Activated naive CD4-positive, alpha-beta T cell treated with anti-CD3 and anti-CD28 coated beads for 36 hours (primary cell): ENCODE measurements at regions of chr5 and their contacts with region 1.

Region 1: DNA sequence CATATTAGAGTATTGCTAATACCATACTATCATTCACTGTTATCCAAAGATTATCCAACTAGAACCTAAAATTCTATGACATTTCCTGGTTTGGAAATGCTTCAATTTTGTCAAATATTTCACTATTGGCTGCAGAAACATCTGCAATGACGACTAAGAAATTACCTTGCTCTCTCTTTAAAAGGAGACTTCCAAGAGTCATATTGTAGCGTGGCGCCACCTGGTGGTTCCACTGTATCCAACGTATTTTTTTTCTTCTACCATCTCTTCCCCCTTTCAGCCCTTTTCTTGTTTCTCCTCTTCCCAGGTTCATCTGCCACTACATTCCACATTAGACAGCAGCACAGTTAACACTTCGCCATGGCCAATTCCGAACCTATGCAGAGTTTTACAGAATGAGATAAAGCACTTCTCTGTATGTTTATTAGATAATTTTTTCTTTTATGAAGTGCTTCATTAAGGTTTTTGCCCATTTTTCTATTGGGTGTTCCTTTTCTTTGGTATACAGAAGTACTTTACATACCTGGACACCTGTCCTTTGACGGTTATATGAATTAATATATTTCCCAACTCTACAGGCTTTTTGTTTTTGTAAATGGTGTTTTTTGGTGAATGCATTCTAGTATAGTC is 153.5 kb downstream of the CDC42SE2 start:
- DNase-seq: peak; percentile 95
- H3K4me3 Mint-ChIP-seq: peak overlapping the region; percentile 34
- H3K27ac Mint-ChIP-seq: peak overlapping the region; percentile 81
- H3K4me1 Mint-ChIP-seq: peaks cover 41% of the 10 kb centered on the region
- H3K27me3 Mint-ChIP-seq: no peaks in the 10 kb centered on the region

Region 2: GRCh38 chr5:130720355-130720754 is 697.0 kb before region 1 on chr5:
- CTCF ChIA-PET with region 1: no interaction called
- intact Hi-C with region 1: loop called (anchors 10 kb)
- DNase-seq: no peak
- H3K4me3 Mint-ChIP-seq: no peak overlapping the region
- H3K27ac Mint-ChIP-seq: no peak overlapping the region
- H3K4me1 Mint-ChIP-seq: no peaks in the 10 kb centered on the region
- H3K27me3 Mint-ChIP-seq: peaks cover 8% of the 10 kb centered on the region

Region 3: GRCh38 chr5:131068893-131069643 is 348.3 kb before region 1 on chr5:
- CTCF ChIA-PET with region 1: no interaction called
- intact Hi-C with region 1: loop called (anchors 1 kb)
- DNase-seq: peak; percentile 87
- H3K4me3 Mint-ChIP-seq: no peak overlapping the region
- H3K27ac Mint-ChIP-seq: peak overlapping the region; percentile 94
- H3K4me1 Mint-ChIP-seq: peaks cover 55% of the 10 kb centered on the region
- H3K27me3 Mint-ChIP-seq: no peaks in the 10 kb centered on the region

Region 4: DNA sequence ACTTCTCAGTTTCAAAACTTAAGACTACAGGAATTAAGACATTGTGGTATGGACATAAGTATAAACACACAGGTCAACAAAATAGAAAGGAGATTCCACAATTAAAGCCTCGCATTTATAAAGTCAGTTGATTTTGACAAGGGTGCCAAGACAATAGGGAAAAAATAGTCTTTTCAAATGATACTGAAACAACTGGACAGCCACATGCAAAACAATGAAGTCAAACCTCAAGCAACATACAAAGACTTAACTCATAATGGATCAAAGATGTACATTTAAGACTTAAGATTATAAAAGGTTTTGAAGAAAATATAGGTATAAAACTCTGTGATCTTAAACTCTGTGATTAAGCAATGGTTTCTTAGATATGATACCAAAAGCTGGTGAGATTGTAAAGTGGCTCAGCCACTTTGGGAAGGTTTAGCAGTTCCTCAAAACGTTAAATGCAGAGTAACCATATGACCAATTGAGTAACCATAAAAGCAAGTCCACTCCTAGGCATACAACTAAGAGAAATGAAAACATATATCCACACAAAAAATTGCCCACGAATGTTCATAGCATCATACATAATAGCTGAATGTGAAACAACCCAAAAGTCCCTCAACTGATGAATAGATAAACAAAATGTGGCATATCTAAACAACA is 274.3 kb before region 1 on chr5:
- CTCF ChIA-PET with region 1: no interaction called
- intact Hi-C with region 1: no loop called
- DNase-seq: no peak
- H3K4me3 Mint-ChIP-seq: no peak overlapping the region
- H3K27ac Mint-ChIP-seq: no peak overlapping the region
- H3K4me1 Mint-ChIP-seq: peaks cover 5% of the 10 kb centered on the region
- H3K27me3 Mint-ChIP-seq: no peaks in the 10 kb centered on the region

Region 5: GRCh38 chr5:131165119-131165727 is 252.1 kb before region 1 on chr5 and contains the start of gene HINT1:
- CTCF ChIA-PET with region 1: interaction called, 4 read pairs
- intact Hi-C with region 1: loop called (anchors 1 kb)
- DNase-seq: peak; percentile 93
- H3K4me3 Mint-ChIP-seq: peak within 1 kb of the TSS; percentile 96
- H3K27ac Mint-ChIP-seq: peak within 1 kb of the TSS; percentile 99
- H3K4me1 Mint-ChIP-seq: peaks cover 44% of the 10 kb centered on the region
- H3K27me3 Mint-ChIP-seq: no peaks in the 10 kb centered on the region
- total RNA-seq, gene HINT1: 372 to 379 TPM